B cell (primary cell): ENCODE measurements at regions of chr13 and their contacts with region 1.

Region 1: GRCh38 chr13:40624383-40624782 is 42.1 kb downstream of the FOXO1 start:
- DNase-seq: no peak
- ATAC-seq: no peak
- H3K4me3 ChIP-seq: no peak overlapping the region
- H3K4me3 Mint-ChIP-seq: no peak overlapping the region
- H3K27ac ChIP-seq: peak overlapping the region in 1 of 2 donors; percentile 18
- H3K27ac Mint-ChIP-seq: peak overlapping the region; percentile 53
- H3K4me1 ChIP-seq: peaks cover 68 to 70% of the 10 kb centered on the region in 2 donors
- H3K4me1 Mint-ChIP-seq: peaks cover 73% of the 10 kb centered on the region
- H3K27me3 ChIP-seq: no peaks in the 10 kb centered on the region
- H3K27me3 Mint-ChIP-seq: no peaks in the 10 kb centered on the region
- CTCF ChIP-seq: no peak

Region 2: GRCh38 chr13:40428354-40428753 is 196.0 kb before region 1 on chr13:
- CTCF ChIA-PET with region 1: no interaction called
- POLR2A ChIA-PET with region 1: interaction called, 11 read pairs
- intact Hi-C with region 1: no loop called
- DNase-seq: no peak
- ATAC-seq: no peak
- H3K4me3 ChIP-seq: no peak overlapping the region
- H3K4me3 Mint-ChIP-seq: no peak overlapping the region
- H3K27ac ChIP-seq: no peak overlapping the region
- H3K27ac Mint-ChIP-seq: no peak overlapping the region
- H3K4me1 ChIP-seq: peaks cover 55% of the 10 kb centered on the region in 2 donors
- H3K4me1 Mint-ChIP-seq: peaks cover 54% of the 10 kb centered on the region
- H3K27me3 ChIP-seq: no peaks in the 10 kb centered on the region
- H3K27me3 Mint-ChIP-seq: no peaks in the 10 kb centered on the region
- CTCF ChIP-seq: no peak

Region 3: DNA sequence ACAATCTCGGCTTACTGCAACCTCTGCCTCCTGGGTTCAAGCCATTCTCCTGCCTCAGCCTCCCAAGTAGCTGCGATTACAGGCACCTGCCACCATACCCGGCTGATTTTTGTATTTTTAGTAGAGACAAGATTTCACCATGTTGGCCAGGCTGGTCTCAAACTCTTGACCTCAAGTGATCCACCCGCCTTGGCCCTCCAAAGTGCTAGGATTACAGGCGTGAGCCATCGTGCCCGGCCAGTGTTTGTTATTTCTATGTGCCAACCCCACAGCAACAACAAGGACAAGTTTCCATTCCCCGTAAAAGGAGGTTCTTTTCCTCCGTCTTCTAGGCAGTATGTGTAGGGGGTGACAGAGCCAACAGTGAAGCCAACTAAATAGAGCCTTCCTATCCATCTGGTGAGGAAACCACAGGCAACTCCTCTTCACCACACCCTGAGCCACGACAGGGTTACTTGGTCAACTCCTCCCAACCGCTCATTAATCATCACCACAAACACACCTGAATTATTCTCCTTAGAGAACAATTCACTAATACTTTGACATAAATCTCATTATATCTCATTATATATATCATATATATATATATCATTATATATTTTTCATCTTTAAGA is 16.6 kb after region 1 on chr13:
- CTCF ChIA-PET with region 1: interaction called, 3 read pairs
- POLR2A ChIA-PET with region 1: no interaction called
- intact Hi-C with region 1: loop called (anchors 2 kb)
- DNase-seq: no peak
- ATAC-seq: no peak
- H3K4me3 ChIP-seq: no peak overlapping the region
- H3K4me3 Mint-ChIP-seq: peak overlapping the region; percentile 12
- H3K27ac ChIP-seq: peak overlapping the region; percentile 19 to 78
- H3K27ac Mint-ChIP-seq: peak overlapping the region; percentile 50
- H3K4me1 ChIP-seq: peaks cover 88 to 89% of the 10 kb centered on the region in 2 donors
- H3K4me1 Mint-ChIP-seq: peaks cover 81% of the 10 kb centered on the region
- H3K27me3 ChIP-seq: no peaks in the 10 kb centered on the region
- H3K27me3 Mint-ChIP-seq: no peaks in the 10 kb centered on the region
- CTCF ChIP-seq: no peak

Region 4: DNA sequence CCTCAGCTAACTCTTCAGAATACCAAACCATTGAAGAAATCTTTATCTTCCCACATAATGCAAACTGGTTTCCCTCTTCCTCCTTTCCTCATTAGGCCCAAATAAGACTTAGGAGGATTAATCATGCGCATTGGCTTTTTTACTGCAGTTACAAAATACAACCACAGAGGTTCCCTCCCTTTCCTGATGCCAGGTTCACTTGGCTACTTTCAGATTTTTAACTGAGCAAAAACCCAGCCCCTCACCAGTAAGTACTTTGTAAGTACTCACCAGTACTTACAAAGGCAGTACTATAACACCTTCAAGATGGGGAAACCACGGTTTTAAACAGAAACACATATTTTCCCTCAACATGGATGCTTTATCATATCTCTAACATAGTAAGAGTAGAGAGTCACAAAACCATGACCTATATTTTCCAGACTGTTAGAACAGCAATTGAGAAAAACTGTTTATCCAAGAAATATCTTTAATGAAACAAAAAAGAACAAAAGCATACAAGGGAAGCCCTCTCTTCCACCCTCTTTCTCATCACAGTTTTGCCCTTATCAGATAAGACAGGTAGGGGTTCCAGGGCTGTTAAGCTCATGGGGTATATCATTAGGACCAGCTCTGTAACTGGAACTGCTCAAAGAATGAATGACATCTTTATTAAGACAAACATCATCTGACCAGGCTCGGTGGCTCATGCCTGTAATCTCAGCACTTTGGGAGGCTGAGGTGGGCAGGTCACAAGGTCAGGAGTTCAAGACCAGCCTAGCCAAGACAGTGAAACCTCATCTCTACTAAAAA is 29.3 kb after region 1 on chr13:
- CTCF ChIA-PET with region 1: no interaction called
- POLR2A ChIA-PET with region 1: interaction called, 10 read pairs
- intact Hi-C with region 1: no loop called
- DNase-seq: no peak
- ATAC-seq: peak; percentile 11
- H3K4me3 ChIP-seq: peak overlapping the region in 2 of 5 experiments; percentile 51 to 58
- H3K4me3 Mint-ChIP-seq: peak overlapping the region; percentile 86
- H3K27ac ChIP-seq: peak overlapping the region; percentile 62 to 73
- H3K27ac Mint-ChIP-seq: peak overlapping the region; percentile 90
- H3K4me1 ChIP-seq: peaks cover 79 to 87% of the 10 kb centered on the region in 2 donors
- H3K4me1 Mint-ChIP-seq: peaks cover 92% of the 10 kb centered on the region
- H3K27me3 ChIP-seq: no peaks in the 10 kb centered on the region
- H3K27me3 Mint-ChIP-seq: no peaks in the 10 kb centered on the region
- CTCF ChIP-seq: no peak